Activated naive CD4-positive, alpha-beta T cell treated with anti-CD3 and anti-CD28 coated beads for 36 hours (primary cell): ENCODE measurements at regions of chr1 and their contacts with region 1.

Region 1: DNA sequence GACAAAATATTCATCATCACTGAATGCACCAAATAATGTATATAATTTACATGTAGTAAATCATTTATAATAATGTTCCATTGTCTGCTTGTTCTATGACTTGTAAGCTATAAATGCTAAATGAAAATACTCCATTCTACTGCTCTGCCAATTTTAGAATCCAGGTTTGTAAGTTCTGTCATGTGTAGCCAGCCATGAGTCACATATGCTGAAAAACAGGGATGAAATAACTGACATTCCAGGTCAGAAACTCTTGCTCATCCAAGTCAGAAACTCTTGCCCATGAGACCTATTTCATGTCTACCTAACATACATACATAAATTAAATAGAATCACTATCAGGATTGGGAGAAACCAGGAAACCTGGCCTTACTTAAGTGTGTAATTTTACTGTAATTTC is 95.6 kb downstream of the ASH1L start:
- DNase-seq: no peak
- H3K4me3 Mint-ChIP-seq: no peak overlapping the region
- H3K27ac Mint-ChIP-seq: peak overlapping the region; percentile 74
- H3K4me1 Mint-ChIP-seq: peaks cover 54% of the 10 kb centered on the region
- H3K27me3 Mint-ChIP-seq: no peaks in the 10 kb centered on the region

Region 2: DNA sequence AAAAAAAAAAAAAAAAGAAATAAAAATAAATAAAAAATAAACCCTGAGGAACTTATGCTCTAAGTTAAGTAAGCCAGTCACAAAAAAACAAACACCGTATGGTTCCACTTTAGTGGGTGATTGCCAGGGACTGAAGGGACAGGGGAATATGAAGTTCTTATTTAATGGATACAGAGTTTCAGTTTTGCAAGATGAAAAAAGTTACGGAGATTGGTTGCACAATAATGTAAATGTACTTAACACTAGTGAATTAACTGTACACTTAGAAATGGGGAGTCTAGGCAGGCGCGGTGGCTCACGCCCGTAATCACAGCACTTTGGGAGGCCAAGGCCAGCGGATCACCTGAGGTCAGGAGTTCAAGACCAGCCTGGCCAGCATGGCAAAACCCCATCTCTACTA is 15.8 kb before region 1 on chr1:
- CTCF ChIA-PET with region 1: interaction called, 3 read pairs
- intact Hi-C with region 1: loop called (anchors 2 kb)
- DNase-seq: no peak
- H3K4me3 Mint-ChIP-seq: no peak overlapping the region
- H3K27ac Mint-ChIP-seq: no peak overlapping the region
- H3K4me1 Mint-ChIP-seq: peaks cover 5% of the 10 kb centered on the region
- H3K27me3 Mint-ChIP-seq: no peaks in the 10 kb centered on the region

Region 3: GRCh38 chr1:155529929-155530328 is 62.9 kb after region 1 on chr1:
- CTCF ChIA-PET with region 1: no interaction called
- intact Hi-C with region 1: no loop called
- DNase-seq: no peak
- H3K4me3 Mint-ChIP-seq: no peak overlapping the region
- H3K27ac Mint-ChIP-seq: no peak overlapping the region
- H3K4me1 Mint-ChIP-seq: peaks cover 47% of the 10 kb centered on the region
- H3K27me3 Mint-ChIP-seq: no peaks in the 10 kb centered on the region

Region 4: GRCh38 chr1:156177919-156178654 is 711.1 kb after region 1 on chr1:
- CTCF ChIA-PET with region 1: no interaction called
- intact Hi-C with region 1: no loop called
- DNase-seq: no peak
- H3K4me3 Mint-ChIP-seq: no peak overlapping the region
- H3K27ac Mint-ChIP-seq: peak overlapping the region; percentile 33
- H3K4me1 Mint-ChIP-seq: peaks cover 16% of the 10 kb centered on the region
- H3K27me3 Mint-ChIP-seq: no peaks in the 10 kb centered on the region